Heart right ventricle (tissue), 16 donors: ENCODE measurements at regions of chr6 and their contacts with region 1.

Region 1: GRCh38 chr6:137218917-137219663 is at the start of gene IFNGR1:
- DNase-seq: peak; percentile 98 to 99
- ATAC-seq: peak; percentile 96 to 97 (median 96)
- H3K4me3 ChIP-seq: peak within 1 kb of the TSS; percentile 45 to 93 (median 84)
- H3K27ac ChIP-seq: peak within 1 kb of the TSS; percentile 86 to 100 (median 98)
- H3K4me1 ChIP-seq: peaks cover 5 to 87% (median 67%) of the 10 kb centered on the region in 9 donors
- H3K27me3 ChIP-seq: no peaks in the 10 kb centered on the region
- CTCF ChIP-seq: no peak
- total RNA-seq, gene IFNGR1: 55.8 to 132 (median 78.7) TPM

Region 2: GRCh38 chr6:136831873-136832562 is 387.1 kb before region 1 on chr6:
- intact Hi-C with region 1: no loop called
- DNase-seq: no peak
- ATAC-seq: no peak
- H3K4me3 ChIP-seq: no peak overlapping the region
- H3K27ac ChIP-seq: peak overlapping the region in 1 of 10 donors; percentile 79
- H3K4me1 ChIP-seq: peaks cover 0 to 7% (median 0%) of the 10 kb centered on the region in 9 donors
- H3K27me3 ChIP-seq: no peaks in the 10 kb centered on the region
- CTCF ChIP-seq: no peak

Region 3: DNA sequence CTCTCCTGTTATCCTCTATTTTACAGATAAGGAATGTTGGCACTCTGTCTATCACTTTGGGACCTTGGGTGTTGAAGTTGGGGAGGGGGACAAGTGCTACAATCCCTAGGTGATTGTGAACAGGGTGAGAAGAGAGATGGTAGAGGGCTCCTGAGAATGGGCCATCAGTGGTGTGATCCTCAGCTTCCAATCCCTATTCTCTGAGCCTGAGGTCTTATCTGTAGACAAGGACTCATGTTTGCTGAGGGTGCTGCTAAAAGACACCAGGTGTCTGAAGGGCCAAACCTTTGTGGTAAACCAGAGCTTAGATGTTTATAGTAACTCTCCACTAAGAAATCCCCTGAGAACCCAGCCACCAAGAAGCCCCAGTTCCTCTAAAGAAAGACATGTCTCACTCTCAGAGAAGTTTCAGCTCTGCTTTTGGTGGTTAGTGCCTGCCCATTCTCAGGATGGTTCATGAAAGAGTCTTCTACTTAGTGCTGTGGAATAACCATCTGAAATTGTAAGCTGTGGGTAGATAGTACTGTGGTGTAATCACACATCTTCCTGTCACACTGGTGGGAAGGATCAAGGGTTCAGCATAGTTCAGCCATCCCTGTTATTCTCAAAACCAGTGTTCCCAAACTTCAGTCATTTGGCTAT is 116.1 kb before region 1 on chr6:
- intact Hi-C with region 1: loop called in 2 of 10 experiments (anchors 5 to 10 kb)
- DNase-seq: no peak
- ATAC-seq: no peak
- H3K4me3 ChIP-seq: no peak overlapping the region
- H3K27ac ChIP-seq: no peak overlapping the region
- H3K4me1 ChIP-seq: peaks cover 0 to 20% (median 0%) of the 10 kb centered on the region in 9 donors
- H3K27me3 ChIP-seq: no peaks in the 10 kb centered on the region
- CTCF ChIP-seq: no peak

Region 4: GRCh38 chr6:137155830-137156229 is 63.3 kb before region 1 on chr6:
- intact Hi-C with region 1: loop called in 1 of 10 experiments (anchors 2 kb)
- DNase-seq: no peak
- ATAC-seq: peak in 2 of 8 donors; percentile 14 to 46
- H3K4me3 ChIP-seq: no peak overlapping the region
- H3K27ac ChIP-seq: peak overlapping the region in 1 of 10 donors; percentile 60
- H3K4me1 ChIP-seq: peaks cover 0 to 37% (median 5%) of the 10 kb centered on the region in 9 donors
- H3K27me3 ChIP-seq: no peaks in the 10 kb centered on the region
- CTCF ChIP-seq: no peak

Region 5: DNA sequence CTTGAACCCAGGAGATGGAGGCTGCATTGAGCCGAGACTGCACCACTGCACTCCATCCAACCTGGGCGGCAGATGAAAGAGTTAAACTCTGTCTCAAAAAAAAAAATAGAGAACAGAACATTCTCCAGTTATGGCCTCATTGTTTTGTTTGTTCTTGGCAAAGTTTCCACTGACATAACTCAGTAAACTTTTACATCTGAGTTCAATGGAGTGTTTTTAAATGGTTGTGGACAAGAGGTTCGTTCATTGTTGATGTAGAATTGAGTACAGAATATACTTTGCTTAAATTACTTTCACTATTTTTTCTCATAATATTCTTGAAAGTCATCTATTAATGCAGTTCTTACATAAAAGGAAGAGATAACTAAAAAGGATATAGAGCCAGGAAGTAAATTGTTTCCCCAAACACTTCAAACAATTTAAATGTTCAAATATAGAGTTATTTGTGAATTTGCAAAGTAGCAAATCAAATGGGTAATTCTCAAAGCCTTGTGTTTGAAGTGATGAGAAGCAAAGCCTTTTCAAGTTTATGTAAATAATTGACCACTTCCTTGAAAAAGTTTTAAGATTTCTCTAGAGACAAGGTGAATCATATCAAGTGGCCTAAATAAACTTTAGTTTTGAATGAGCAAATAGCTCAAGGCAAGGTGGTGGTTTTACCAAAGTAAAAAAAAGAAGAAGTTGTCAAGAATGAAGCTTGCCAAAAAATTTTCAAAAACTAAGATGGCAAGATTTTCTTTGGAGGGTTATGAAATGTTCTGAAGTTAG is 42.5 kb after region 1 on chr6:
- intact Hi-C with region 1: loop called in 3 of 10 experiments (anchors 5 kb)
- DNase-seq: no peak
- ATAC-seq: peak in 6 of 8 donors; percentile 39 to 85 (median 62)
- H3K4me3 ChIP-seq: no peak overlapping the region
- H3K27ac ChIP-seq: peak overlapping the region; percentile 0 to 71 (median 49)
- H3K4me1 ChIP-seq: peaks cover 0 to 44% (median 18%) of the 10 kb centered on the region in 9 donors
- H3K27me3 ChIP-seq: no peaks in the 10 kb centered on the region
- CTCF ChIP-seq: no peak